K562 (cell line): ENCODE measurements at regions of chr2 and their contacts with region 1.

Region 1: GRCh38 chr2:96760036-96760985 is at the start of gene CNNM4:
- DNase-seq: peak; percentile 93 to 96 (median 96)
- ATAC-seq: peak; percentile 87
- H3K4me3 ChIP-seq: peak within 1 kb of the TSS; percentile 54
- H3K27ac ChIP-seq: peak within 1 kb of the TSS; percentile 77
- H3K4me1 ChIP-seq: peaks cover 34 to 45% of the 10 kb centered on the region in 2 experiments
- H3K27me3 ChIP-seq: no peaks in the 10 kb centered on the region; a peak in 1 of 5 replicates
- CTCF ChIP-seq: peak in 2 of 3 experiments; percentile 24 to 30; a peak in 3 of 6 replicates
- EP300 ChIP-seq: no peak
- POLR2A ChIP-seq: no peak
- RAD21 ChIP-seq: no peak
- polyA plus RNA-seq, gene CNNM4: 0.96 to 1.4 TPM

Region 2: GRCh38 chr2:96554293-96555145 is 205.8 kb before region 1 on chr2:
- CTCF ChIA-PET with region 1: interaction called, 4 read pairs
- POLR2A ChIA-PET with region 1: no interaction called
- in situ Hi-C with region 1: no loop called
- intact Hi-C with region 1: loop called (anchors 5 kb)
- DNase-seq: peak; percentile 61 to 78 (median 70)
- ATAC-seq: peak; percentile 69
- H3K4me3 ChIP-seq: no peak overlapping the region
- H3K27ac ChIP-seq: no peak overlapping the region
- H3K4me1 ChIP-seq: peaks cover 0 to 31% of the 10 kb centered on the region in 2 experiments; a peak in 3 of 5 replicates
- H3K27me3 ChIP-seq: peaks cover 0 to 13% of the 10 kb centered on the region in 2 experiments; a peak in 1 of 5 replicates
- CTCF ChIP-seq: peak; percentile 74 to 94 (median 79)
- EP300 ChIP-seq: no peak
- POLR2A ChIP-seq: no peak
- RAD21 ChIP-seq: peak; percentile 47 to 75

Region 3: GRCh38 chr2:96580771-96581170 is 179.5 kb before region 1 on chr2:
- CTCF ChIA-PET with region 1: no interaction called
- POLR2A ChIA-PET with region 1: no interaction called
- in situ Hi-C with region 1: no loop called
- intact Hi-C with region 1: no loop called
- DNase-seq: peak in 3 of 4 experiments; percentile 33 to 47 (median 41)
- ATAC-seq: peak; percentile 93
- H3K4me3 ChIP-seq: no peak overlapping the region
- H3K27ac ChIP-seq: no peak overlapping the region
- H3K4me1 ChIP-seq: no peaks in the 10 kb centered on the region; a peak in 1 of 5 replicates
- H3K27me3 ChIP-seq: no peaks in the 10 kb centered on the region
- CTCF ChIP-seq: peak; percentile 40 to 66 (median 55); a peak in 5 of 6 replicates
- EP300 ChIP-seq: no peak
- POLR2A ChIP-seq: no peak
- RAD21 ChIP-seq: peak; percentile 20 to 57; a peak in 3 of 4 replicates

Region 4: GRCh38 chr2:96638144-96639121 is 121.9 kb before region 1 on chr2 and contains the start of gene KANSL3:
- CTCF ChIA-PET with region 1: no interaction called
- POLR2A ChIA-PET with region 1: interaction called, 5 read pairs
- in situ Hi-C with region 1: no loop called
- intact Hi-C with region 1: loop called (anchors 5 kb)
- DNase-seq: peak; percentile 89 to 95 (median 92)
- ATAC-seq: peak; percentile 70
- H3K4me3 ChIP-seq: peak within 1 kb of the TSS; percentile 45
- H3K27ac ChIP-seq: peak within 1 kb of the TSS; percentile 96
- H3K4me1 ChIP-seq: peaks cover 11 to 17% of the 10 kb centered on the region in 2 experiments; a peak in 4 of 5 replicates
- H3K27me3 ChIP-seq: no peaks in the 10 kb centered on the region
- CTCF ChIP-seq: peak in 1 of 3 experiments; percentile 16; a peak in 2 of 6 replicates
- EP300 ChIP-seq: peak; percentile 76
- POLR2A ChIP-seq: peak; percentile 88
- RAD21 ChIP-seq: peak in 1 of 2 experiments; percentile 34; a peak in 2 of 4 replicates
- polyA plus RNA-seq, gene KANSL3: 11.3 to 20.1 TPM

Region 5: DNA sequence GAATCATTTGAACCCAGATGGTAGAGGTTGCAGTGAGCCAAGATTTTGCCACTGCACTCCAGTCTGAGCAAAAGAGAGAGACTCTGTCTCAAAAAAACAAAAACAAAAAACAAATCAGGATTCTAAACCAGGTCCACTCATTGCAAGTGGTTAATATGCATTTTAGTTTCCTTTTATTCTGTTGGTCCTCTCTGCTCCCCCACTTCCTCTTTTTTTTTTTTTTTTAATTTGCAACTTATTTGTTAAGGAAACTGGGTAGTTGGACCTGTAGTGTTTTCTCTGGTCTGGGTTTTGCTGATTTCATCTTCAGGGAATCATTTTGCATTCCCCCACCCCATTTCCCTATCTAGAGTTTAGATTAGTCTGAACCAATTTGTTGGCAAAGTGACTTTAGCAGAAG is 103.8 kb before region 1 on chr2:
- CTCF ChIA-PET with region 1: no interaction called
- POLR2A ChIA-PET with region 1: no interaction called
- in situ Hi-C with region 1: no loop called
- intact Hi-C with region 1: no loop called
- DNase-seq: no peak
- ATAC-seq: no peak
- H3K4me3 ChIP-seq: no peak overlapping the region
- H3K27ac ChIP-seq: no peak overlapping the region
- H3K4me1 ChIP-seq: no peaks in the 10 kb centered on the region
- H3K27me3 ChIP-seq: peaks cover 9 to 28% of the 10 kb centered on the region in 2 experiments; a peak in 4 of 5 replicates
- CTCF ChIP-seq: no peak
- EP300 ChIP-seq: no peak
- POLR2A ChIP-seq: no peak
- RAD21 ChIP-seq: no peak

Region 6: DNA sequence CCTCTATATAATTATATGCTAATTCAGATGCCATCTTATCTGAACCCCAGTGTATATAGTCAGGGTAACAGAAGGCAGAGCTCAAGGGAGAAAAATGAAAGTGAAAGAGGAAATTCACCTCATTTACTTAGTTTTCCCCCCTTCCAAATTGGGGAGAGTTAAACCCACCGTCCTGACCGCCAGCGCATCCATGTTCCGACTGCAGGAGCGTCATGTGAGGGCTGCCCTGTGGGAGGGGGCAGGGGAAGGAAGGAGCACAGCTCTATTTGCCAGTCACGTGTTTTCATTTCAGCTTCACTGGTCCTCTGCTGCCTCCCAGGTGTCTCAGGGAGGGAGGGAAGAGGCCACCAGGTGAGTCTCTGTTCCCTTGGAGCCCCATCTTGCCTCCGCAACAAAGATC is 13.6 kb after region 1 on chr2:
- CTCF ChIA-PET with region 1: no interaction called
- POLR2A ChIA-PET with region 1: interaction called, 15 read pairs
- in situ Hi-C with region 1: no loop called
- intact Hi-C with region 1: no loop called
- DNase-seq: no peak
- ATAC-seq: no peak; the same call in 2 of the 3 replicates
- H3K4me3 ChIP-seq: no peak overlapping the region
- H3K27ac ChIP-seq: no peak overlapping the region
- H3K4me1 ChIP-seq: peaks cover 0 to 20% of the 10 kb centered on the region in 2 experiments; a peak in 2 of 5 replicates
- H3K27me3 ChIP-seq: no peaks in the 10 kb centered on the region
- CTCF ChIP-seq: no peak
- EP300 ChIP-seq: no peak
- POLR2A ChIP-seq: no peak
- RAD21 ChIP-seq: no peak

Region 7: GRCh38 chr2:96816128-96816835 is 56.0 kb after region 1 on chr2 and contains the start of gene CNNM3:
- CTCF ChIA-PET with region 1: no interaction called
- POLR2A ChIA-PET with region 1: no interaction called
- in situ Hi-C with region 1: no loop called
- intact Hi-C with region 1: loop called (anchors 5 kb)
- DNase-seq: peak; percentile 96 to 99 (median 98)
- ATAC-seq: peak; percentile 97
- H3K4me3 ChIP-seq: peak within 1 kb of the TSS; percentile 80
- H3K27ac ChIP-seq: peak within 1 kb of the TSS; percentile 81
- H3K4me1 ChIP-seq: peaks cover 34 to 49% of the 10 kb centered on the region in 2 experiments
- H3K27me3 ChIP-seq: no peaks in the 10 kb centered on the region
- CTCF ChIP-seq: peak; percentile 52 to 59 (median 55); a peak in 5 of 6 replicates
- EP300 ChIP-seq: no peak
- POLR2A ChIP-seq: peak; percentile 85
- RAD21 ChIP-seq: peak in 1 of 2 experiments; percentile 14; a peak in 2 of 4 replicates
- polyA plus RNA-seq, gene CNNM3: 1.4 to 1.6 TPM